A549 (cell line): ENCODE measurements at regions of chr15 and their contacts with region 1.

Region 1: DNA sequence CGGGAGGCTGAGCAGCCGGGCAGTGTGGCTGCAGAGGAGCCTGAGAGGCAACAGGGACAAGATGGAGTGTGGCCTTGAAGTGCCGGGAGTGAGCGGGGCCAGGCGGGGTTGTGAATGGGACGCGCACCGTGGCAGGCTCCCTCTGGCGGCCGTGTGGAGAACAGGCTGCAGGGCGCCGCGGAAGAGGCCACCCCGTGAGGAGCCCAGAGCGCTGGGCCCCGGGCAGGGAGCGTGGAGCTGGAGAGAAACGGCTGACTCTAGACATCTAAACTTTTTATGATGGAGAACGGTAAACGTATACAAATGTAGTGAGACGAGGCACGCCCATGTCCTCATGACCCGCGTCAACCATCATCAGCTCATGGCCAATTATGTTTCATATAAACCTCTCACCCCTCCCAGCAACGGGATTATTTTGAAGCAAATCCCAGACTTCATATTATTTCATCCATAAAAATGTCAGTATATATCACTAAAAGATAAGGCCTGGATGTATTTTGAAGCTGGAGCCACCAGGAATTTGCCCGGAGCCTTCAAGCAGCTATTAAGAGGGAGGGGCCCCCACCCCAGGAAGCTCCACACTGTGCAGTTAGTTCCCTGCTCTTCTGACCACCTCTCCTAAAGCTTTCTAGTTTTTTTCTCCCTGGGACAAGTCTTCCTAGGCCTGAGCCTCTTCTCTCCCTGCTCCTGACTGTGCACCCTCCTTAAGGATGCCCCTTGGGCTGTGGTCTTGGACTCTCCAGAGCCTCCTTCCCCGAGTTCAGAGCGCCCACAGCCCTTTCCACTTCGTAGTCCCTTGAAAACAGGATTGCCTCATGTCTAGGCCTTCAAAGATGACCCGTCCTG is 149.4 kb downstream of the SMAD6 start:
- DNase-seq: peak; percentile 92 to 97
- ATAC-seq: peak; percentile 87 to 95
- H3K4me3 ChIP-seq: no peak overlapping the region
- H3K27ac ChIP-seq: peak overlapping the region; percentile 64 to 81
- H3K4me1 ChIP-seq: peaks cover 34% of the 10 kb centered on the region
- CTCF ChIP-seq: peak; percentile 93
- EP300 ChIP-seq: no peak
- POLR2A ChIP-seq: no peak
- RAD21 ChIP-seq: peak; percentile 83 to 93

Region 2: DNA sequence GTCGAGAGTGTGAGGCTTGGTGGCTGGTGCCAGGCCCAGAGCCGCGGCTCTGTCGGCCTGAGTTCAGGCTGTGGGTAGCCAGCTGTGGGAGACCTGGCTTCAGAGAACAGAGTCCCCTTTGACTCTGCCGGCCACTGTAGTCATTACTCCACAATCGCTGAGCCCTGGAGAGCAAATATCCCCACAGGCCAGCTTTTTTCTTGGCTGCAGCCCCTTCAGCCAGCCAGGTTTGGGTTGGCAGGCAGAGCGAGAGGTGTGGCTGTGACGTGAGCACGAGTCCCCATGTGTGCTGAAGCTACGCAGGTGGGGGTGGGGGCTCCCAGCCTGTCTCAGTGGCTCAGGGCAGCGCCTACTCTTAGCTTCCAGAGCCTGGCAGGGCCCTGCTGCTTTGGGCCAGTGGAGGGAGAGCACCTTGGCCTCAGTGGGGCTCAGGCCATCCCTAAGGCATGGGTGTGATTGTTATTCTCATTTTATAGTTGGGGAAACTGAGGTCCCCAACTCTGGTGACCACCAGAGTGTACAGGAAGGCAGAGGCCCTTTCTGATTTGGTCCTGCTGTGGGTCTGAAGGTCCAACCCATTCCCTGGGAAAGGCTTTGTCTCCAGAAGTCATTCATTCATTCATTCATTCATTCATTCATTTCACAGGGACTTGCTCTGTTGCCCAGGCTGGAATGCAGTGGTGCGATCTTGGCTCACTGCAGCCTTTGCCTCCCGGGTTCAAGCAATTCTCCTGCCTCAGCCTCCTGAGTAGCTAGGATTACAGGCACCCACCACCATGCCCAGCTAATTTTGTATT is 240.0 kb before region 1 on chr15:
- CTCF ChIA-PET with region 1: interaction called, 148 read pairs
- POLR2A ChIA-PET with region 1: no interaction called
- DNase-seq: no peak
- ATAC-seq: peak; percentile 26 to 50; a peak in 2 of 6 replicates
- H3K4me3 ChIP-seq: no peak overlapping the region
- H3K27ac ChIP-seq: no peak overlapping the region
- H3K4me1 ChIP-seq: no peaks in the 10 kb centered on the region
- CTCF ChIP-seq: no peak
- EP300 ChIP-seq: no peak
- POLR2A ChIP-seq: no peak
- RAD21 ChIP-seq: no peak

Region 3: DNA sequence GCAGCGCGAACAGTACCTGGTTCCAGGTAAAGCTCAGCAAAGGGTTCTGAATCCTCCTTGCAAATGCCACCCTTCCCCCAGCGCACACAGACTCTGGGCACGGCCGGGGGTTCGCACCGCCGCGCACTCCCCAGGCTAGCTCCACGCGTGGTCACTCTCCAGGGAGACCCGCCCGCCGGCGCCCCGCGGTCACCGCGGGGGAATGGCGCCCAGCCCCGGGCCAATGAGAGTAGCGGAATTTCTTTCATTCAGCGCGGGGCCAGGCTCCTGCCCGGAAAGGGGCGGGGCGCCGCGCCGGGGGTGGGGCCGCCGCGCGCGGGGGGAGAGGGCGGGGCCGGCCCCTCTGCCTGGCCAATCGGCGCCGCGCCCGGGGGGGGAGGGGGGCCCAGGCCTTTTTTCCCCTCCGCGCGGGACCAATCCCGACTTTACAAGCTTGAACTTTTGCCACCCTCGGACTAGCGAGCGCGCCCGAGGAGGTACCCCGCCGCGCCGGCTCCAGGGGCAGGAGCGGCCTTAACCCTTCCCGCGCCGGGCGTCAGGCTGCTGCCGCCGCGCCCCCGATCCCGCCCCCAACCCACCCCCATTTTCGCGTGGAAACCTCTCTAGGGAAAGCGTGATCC is 150.5 kb before region 1 on chr15:
- CTCF ChIA-PET with region 1: interaction called, 283 read pairs
- POLR2A ChIA-PET with region 1: interaction called, 14 read pairs
- DNase-seq: peak; percentile 92 to 98
- ATAC-seq: peak; percentile 62 to 73
- H3K4me3 ChIP-seq: peak overlapping the region; percentile 90
- H3K27ac ChIP-seq: peak overlapping the region; percentile 95
- H3K4me1 ChIP-seq: peaks cover 35% of the 10 kb centered on the region
- CTCF ChIP-seq: no peak
- EP300 ChIP-seq: peak in 1 of 2 experiments; percentile 58; a peak in 1 of 5 replicates
- POLR2A ChIP-seq: peak; percentile 62
- RAD21 ChIP-seq: peak in 1 of 2 experiments; percentile 26; a peak in 2 of 5 replicates

Region 4: DNA sequence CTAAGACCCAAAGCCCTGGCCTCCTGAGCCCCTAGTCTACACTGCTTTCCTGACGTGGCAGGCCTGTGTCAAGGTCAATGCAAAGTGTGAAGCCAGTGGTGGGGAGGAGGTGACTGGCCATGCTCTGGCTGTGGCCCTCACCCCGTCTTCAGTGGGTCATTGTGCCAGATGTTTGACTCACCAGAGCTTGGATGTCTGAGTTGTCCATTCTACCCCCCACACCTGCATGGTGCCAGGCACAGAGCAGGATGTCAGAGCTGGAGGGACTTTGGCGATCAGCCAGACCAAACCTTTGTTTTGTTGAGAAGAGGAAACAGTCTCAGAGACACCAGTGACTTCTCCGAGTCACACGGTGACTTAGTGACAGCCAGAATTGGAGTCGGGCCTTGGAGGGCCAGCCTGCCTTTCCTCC is 99.9 kb before region 1 on chr15:
- CTCF ChIA-PET with region 1: interaction called, 25 read pairs
- POLR2A ChIA-PET with region 1: no interaction called
- DNase-seq: peak in 1 of 2 experiments; percentile 77
- ATAC-seq: peak; percentile 16 to 32; a peak in 5 of 6 replicates
- H3K4me3 ChIP-seq: no peak overlapping the region
- H3K27ac ChIP-seq: peak overlapping the region; percentile 71 to 87
- H3K4me1 ChIP-seq: peaks cover 76% of the 10 kb centered on the region
- CTCF ChIP-seq: no peak
- EP300 ChIP-seq: peak in 1 of 2 experiments; percentile 24; a peak in 1 of 5 replicates
- POLR2A ChIP-seq: no peak
- RAD21 ChIP-seq: no peak

Region 5: GRCh38 chr15:66803182-66803729 is 48.2 kb before region 1 on chr15:
- CTCF ChIA-PET with region 1: interaction called, 465 read pairs
- POLR2A ChIA-PET with region 1: no interaction called
- DNase-seq: peak; percentile 95 to 98
- ATAC-seq: peak; percentile 97 to 99
- H3K4me3 ChIP-seq: no peak overlapping the region
- H3K27ac ChIP-seq: peak overlapping the region; percentile 83 to 93
- H3K4me1 ChIP-seq: peaks cover 58% of the 10 kb centered on the region
- CTCF ChIP-seq: no peak
- EP300 ChIP-seq: peak; percentile 13 to 65; a peak in 2 of 5 replicates
- POLR2A ChIP-seq: peak; percentile 21; the same call in 1 of the 2 replicates
- RAD21 ChIP-seq: peak in 1 of 2 experiments; percentile 33; a peak in 2 of 5 replicates

Region 6: DNA sequence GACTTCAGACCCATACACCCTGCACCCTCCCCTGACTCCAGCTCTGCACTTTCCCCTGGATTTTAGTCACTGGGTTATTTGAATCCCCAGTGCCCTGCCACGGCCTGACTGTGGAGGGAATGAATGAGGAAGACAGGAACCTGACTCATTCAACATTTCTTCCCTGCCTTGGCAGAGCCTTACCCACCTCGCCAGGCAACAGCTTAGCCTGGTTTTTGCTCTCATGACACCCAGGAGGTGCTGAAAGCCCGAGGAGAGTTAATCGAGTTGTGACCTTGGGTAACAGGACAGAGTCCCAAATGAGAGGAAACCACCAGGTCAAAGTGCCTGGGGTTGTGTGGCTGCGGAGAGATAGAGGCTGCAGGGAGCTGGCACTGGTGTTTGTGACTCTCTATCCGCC is 21.1 kb before region 1 on chr15:
- CTCF ChIA-PET with region 1: interaction called, 157 read pairs
- POLR2A ChIA-PET with region 1: no interaction called
- DNase-seq: peak in 1 of 2 experiments; percentile 32
- ATAC-seq: peak; percentile 71 to 87
- H3K4me3 ChIP-seq: no peak overlapping the region
- H3K27ac ChIP-seq: peak overlapping the region in 1 of 2 experiments; percentile 56; a peak in 3 of 6 replicates
- H3K4me1 ChIP-seq: peaks cover 8% of the 10 kb centered on the region
- CTCF ChIP-seq: no peak
- EP300 ChIP-seq: no peak
- POLR2A ChIP-seq: no peak
- RAD21 ChIP-seq: no peak

Region 7: DNA sequence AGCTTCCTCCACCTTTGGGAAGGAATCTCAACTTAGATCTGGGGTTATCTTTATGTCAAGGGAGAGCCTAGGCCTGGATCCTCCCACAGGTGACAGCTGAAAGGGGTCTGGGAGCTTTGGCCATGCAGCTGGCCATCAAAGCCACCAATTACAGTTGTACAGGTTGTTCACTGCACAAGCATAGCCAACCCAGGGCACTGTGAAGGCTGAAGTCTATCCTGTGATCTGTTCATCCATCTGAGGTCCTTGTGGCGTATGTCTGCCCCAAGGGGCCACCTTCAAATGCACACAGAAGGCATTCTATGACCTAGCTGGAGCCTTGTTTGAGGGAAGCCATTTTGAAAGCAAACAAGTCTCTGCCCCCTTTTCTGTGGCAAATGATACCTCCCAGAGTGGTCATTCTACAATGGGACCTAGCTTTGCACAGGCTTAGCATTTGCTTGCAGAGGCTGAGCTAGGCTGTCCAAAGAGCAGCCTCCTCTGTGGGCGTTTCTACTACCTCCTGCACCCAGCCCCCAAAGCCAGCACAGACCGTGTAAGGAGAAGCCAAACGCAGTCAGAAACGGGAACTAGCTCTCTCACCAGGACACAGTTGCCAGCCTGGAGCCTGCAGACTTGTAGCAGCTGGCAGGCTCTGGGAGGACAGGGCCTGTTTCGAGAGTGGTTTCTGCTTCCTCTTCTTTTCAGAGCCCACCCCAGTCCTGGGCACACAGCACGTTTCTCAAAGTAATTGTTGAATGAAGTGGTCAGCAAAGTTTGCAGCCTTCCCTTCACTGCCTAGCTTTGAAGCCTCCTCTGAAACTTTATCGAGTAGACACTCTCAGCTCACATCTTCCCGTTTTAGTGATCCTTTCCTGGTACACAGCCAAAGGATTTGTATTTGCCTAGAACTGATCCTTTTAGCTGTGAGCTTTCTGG is 56.6 kb after region 1 on chr15:
- CTCF ChIA-PET with region 1: interaction called, 28 read pairs
- POLR2A ChIA-PET with region 1: no interaction called
- DNase-seq: no peak
- ATAC-seq: peak; percentile 7 to 15; a peak in 2 of 6 replicates
- H3K4me3 ChIP-seq: no peak overlapping the region
- H3K27ac ChIP-seq: peak overlapping the region in 1 of 2 experiments; percentile 38; a peak in 2 of 6 replicates
- H3K4me1 ChIP-seq: peaks cover 12% of the 10 kb centered on the region; the same call in 2 of the 3 replicates
- CTCF ChIP-seq: no peak
- EP300 ChIP-seq: no peak
- POLR2A ChIP-seq: no peak
- RAD21 ChIP-seq: no peak

Region 8: GRCh38 chr15:67033571-67034044 is 182.2 kb after region 1 on chr15:
- CTCF ChIA-PET with region 1: no interaction called
- POLR2A ChIA-PET with region 1: no interaction called
- DNase-seq: no peak
- ATAC-seq: no peak
- H3K4me3 ChIP-seq: no peak overlapping the region
- H3K27ac ChIP-seq: peak overlapping the region in 1 of 2 experiments; percentile 46; a peak in 2 of 6 replicates
- H3K4me1 ChIP-seq: peaks cover 22% of the 10 kb centered on the region
- CTCF ChIP-seq: no peak
- EP300 ChIP-seq: no peak
- POLR2A ChIP-seq: no peak
- RAD21 ChIP-seq: no peak; a peak in 1 of 5 replicates